ENCODE measurements at regions of chr18 and their contacts with region 1.

Region 1: DNA sequence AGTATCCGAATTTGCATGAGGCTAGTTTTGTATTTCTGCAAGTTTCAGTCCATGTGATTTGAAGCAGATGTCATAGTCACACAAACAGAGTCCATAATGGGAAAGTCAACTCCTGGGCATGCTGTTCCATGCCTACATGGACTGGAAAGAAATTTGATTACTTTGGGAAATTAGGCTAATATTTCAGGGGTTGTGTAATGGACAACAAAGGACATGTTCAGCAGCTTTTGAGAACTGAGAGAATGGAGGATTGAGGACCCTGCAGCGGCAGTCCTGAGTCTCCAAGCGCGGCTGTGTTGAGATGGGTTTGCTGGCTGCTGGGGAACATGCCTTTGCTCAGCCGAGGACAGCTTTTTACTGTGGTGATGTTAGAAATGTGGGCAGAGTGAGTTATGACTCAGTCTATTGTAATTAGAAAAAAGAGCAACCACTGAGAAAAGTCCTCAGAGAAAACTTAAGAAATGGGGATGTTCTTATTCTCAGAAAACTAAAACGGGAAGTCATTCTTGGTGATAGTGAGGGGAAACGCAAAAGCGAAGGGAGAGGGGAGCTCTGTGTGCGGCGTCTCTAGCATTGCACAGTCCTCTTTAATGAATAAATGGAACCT is 149.2 kb downstream of the FAM210A start:
- DNase-seq: peak; percentile 71
- ATAC-seq: peak; percentile 90
- H3K4me3 Mint-ChIP-seq: peak overlapping the region; percentile 60
- H3K27ac Mint-ChIP-seq: peak overlapping the region; percentile 89
- H3K4me1 Mint-ChIP-seq: peaks cover 76% of the 10 kb centered on the region
- H3K27me3 Mint-ChIP-seq: no peaks in the 10 kb centered on the region

Region 2: GRCh38 chr18:13416208-13416607 is 161.0 kb before region 1 on chr18:
- CTCF ChIA-PET with region 1: no interaction called
- POLR2A ChIA-PET with region 1: no interaction called
- DNase-seq: no peak
- ATAC-seq: peak; percentile 60
- H3K4me3 Mint-ChIP-seq: no peak overlapping the region
- H3K27ac Mint-ChIP-seq: no peak overlapping the region
- H3K4me1 Mint-ChIP-seq: peaks cover 35% of the 10 kb centered on the region
- H3K27me3 Mint-ChIP-seq: no peaks in the 10 kb centered on the region

Region 3: GRCh38 chr18:13435596-13436327 is 141.4 kb before region 1 on chr18:
- CTCF ChIA-PET with region 1: no interaction called
- POLR2A ChIA-PET with region 1: no interaction called
- DNase-seq: no peak
- ATAC-seq: no peak
- H3K4me3 Mint-ChIP-seq: no peak overlapping the region
- H3K27ac Mint-ChIP-seq: peak overlapping the region; percentile 28
- H3K4me1 Mint-ChIP-seq: peaks cover 51% of the 10 kb centered on the region
- H3K27me3 Mint-ChIP-seq: no peaks in the 10 kb centered on the region

Region 4: DNA sequence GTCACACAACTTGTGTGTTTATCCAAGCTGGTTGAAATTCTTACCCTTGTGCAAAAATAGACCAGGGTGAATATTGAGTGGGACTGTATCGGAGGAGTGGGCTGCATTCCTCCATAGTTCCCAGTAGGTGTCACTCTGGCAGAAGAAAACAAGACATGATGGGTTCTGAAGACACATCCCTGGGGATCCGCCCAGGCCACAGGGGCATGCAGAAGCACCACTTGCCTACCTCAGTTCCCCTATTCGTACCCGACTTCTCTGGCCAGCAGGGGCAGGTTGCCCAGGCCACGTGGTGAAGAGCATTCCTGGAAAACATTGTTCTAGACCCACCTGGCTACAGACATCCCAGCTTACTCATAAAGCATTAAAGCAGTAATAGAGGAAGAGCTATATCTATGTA is 19.1 kb before region 1 on chr18:
- CTCF ChIA-PET with region 1: interaction called, 11 read pairs
- POLR2A ChIA-PET with region 1: interaction called, 9 read pairs
- DNase-seq: peak; percentile 55
- ATAC-seq: peak; percentile 67
- H3K4me3 Mint-ChIP-seq: no peak overlapping the region
- H3K27ac Mint-ChIP-seq: peak overlapping the region; percentile 71
- H3K4me1 Mint-ChIP-seq: peaks cover 36% of the 10 kb centered on the region
- H3K27me3 Mint-ChIP-seq: no peaks in the 10 kb centered on the region

Region 5: GRCh38 chr18:13566941-13567746 is 10.1 kb before region 1 on chr18:
- CTCF ChIA-PET with region 1: interaction called, 18 read pairs
- POLR2A ChIA-PET with region 1: interaction called, 12 read pairs
- DNase-seq: peak; percentile 58
- ATAC-seq: peak; percentile 50
- H3K4me3 Mint-ChIP-seq: peak overlapping the region; percentile 73
- H3K27ac Mint-ChIP-seq: peak overlapping the region; percentile 96
- H3K4me1 Mint-ChIP-seq: peaks cover 87% of the 10 kb centered on the region
- H3K27me3 Mint-ChIP-seq: no peaks in the 10 kb centered on the region

Region 6: GRCh38 chr18:13587937-13588336 is 10.7 kb after region 1 on chr18:
- CTCF ChIA-PET with region 1: interaction called, 12 read pairs
- POLR2A ChIA-PET with region 1: interaction called, 4 read pairs
- DNase-seq: peak; percentile 9
- ATAC-seq: no peak
- H3K4me3 Mint-ChIP-seq: peak overlapping the region; percentile 23
- H3K27ac Mint-ChIP-seq: peak overlapping the region; percentile 75
- H3K4me1 Mint-ChIP-seq: peaks cover 81% of the 10 kb centered on the region
- H3K27me3 Mint-ChIP-seq: no peaks in the 10 kb centered on the region

Region 7: DNA sequence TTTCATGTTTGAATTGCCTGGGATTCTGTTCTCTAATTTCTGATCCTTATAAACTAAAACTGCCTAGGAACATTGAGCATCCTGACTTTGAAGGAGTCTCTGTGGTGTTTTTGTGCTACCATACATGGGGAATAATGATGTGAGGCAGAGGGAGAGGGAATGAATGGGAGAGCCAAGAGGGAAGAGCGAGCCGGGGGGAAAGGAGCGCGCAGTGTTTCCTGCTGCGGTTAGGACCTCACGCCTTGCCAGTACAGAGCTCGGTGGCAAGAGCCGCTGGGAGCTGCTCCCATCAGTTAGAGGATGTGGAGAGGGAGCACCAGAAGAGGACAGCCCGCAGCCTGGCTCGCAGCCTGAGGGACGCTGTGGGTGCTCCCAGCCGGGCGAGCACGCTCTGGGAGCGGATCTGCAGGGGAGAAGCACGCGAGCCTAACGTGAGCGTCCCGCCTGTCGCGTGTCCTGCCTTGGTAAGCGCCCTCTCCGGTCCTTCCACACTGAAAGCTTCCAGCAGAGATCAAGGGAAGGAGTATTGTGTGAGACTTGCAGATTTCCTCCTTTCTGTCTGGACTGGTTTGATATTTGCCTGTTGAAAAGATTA is 34.5 kb after region 1 on chr18:
- CTCF ChIA-PET with region 1: interaction called, 11 read pairs
- POLR2A ChIA-PET with region 1: interaction called, 61 read pairs
- DNase-seq: peak; percentile 44
- ATAC-seq: peak; percentile 22
- H3K4me3 Mint-ChIP-seq: peak overlapping the region; percentile 84
- H3K27ac Mint-ChIP-seq: peak overlapping the region; percentile 99
- H3K4me1 Mint-ChIP-seq: peaks cover 92% of the 10 kb centered on the region
- H3K27me3 Mint-ChIP-seq: no peaks in the 10 kb centered on the region

Region 8: DNA sequence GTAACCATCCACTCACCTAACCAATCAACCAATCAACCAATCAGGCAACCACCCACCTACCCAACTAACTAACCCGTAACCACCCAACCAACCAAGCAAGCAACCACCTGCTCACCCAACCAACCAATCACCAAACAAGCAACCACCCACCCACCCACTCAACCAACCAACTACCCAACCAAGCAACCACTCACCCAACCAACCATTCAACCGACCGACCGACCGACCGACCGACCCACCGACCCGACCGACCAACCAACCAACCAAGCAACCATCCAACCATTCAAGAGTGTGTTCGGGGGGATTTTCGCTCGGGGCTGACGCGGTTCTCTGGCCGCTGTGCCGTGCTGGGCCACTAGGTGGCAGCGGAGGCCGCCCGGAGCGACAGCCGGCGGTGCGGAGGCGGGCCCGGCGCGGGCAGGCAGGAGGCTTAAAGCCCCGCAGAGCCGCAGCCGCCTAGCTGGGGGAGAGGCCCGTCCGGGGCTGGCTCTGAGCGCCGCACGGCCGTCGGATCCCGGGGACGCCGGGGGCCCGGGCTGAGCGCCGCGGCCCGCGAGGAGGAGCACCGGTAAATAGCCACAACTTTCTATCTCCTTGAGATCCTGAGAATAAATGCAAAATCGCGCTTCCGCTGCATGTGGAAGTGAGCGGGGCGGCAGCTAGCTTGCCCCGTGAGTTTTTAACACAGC is 246.7 kb after region 1 on chr18 and contains the start of gene MC5R:
- CTCF ChIA-PET with region 1: no interaction called
- POLR2A ChIA-PET with region 1: no interaction called
- DNase-seq: peak; percentile 74
- ATAC-seq: peak; percentile 99
- H3K4me3 Mint-ChIP-seq: peak within 1 kb of the TSS; percentile 40
- H3K27ac Mint-ChIP-seq: no peak within 1 kb of the TSS
- H3K4me1 Mint-ChIP-seq: peaks cover 9% of the 10 kb centered on the region
- H3K27me3 Mint-ChIP-seq: peaks cover 12% of the 10 kb centered on the region
- total RNA-seq, gene MC5R: not detected